CD14-positive monocyte (primary cell): ENCODE measurements at regions of chr18 and their contacts with region 1.

Region 1: DNA sequence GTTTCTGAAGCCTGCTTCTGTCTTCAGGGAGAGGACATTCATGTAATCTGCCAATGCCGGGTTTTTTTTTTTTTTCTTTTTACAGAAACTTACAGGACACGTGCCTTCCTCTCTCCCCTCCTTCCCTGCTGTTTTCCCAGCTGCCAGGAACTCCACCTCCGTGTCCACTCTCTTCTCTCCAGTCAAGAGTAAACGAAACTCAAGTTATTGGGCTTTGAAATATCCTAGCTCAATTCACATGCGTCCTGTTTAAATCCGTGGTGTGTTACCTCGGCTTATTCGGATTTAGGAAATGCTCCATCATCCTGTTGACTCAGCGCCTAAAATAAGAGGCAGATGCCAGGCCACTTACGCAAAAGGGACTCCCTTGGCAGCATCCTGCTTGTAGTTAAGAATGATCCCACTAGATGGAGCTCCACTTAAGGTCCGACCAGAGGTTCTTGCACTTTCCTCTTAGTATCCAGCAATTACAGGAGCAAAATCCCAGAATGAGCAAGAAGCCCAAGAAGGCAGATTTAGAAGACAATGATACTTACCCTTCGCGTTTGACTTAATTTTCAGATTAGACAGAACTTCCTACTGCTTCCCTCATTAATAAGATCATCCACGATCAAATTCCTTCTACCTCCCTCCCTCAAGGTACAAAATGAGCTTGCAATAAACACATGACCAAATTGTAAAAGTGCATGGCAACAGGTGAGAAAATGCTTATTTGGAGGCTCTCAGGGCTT is 97.2 kb upstream of the ZCCHC2 start:
- DNase-seq: peak; percentile 90 to 95 (median 94)
- H3K4me3 ChIP-seq: peak overlapping the region in 1 of 3 experiments; percentile 39
- H3K4me3 Mint-ChIP-seq: peak overlapping the region; percentile 48 to 89
- H3K27ac ChIP-seq: peak overlapping the region in 1 of 2 donors; percentile 20
- H3K27ac Mint-ChIP-seq: peak overlapping the region; percentile 63 to 88 (median 83)
- H3K4me1 ChIP-seq: peaks cover 26 to 32% of the 10 kb centered on the region in 2 donors
- H3K4me1 Mint-ChIP-seq: peaks cover 29% of the 10 kb centered on the region
- H3K27me3 ChIP-seq: no peaks in the 10 kb centered on the region
- H3K27me3 Mint-ChIP-seq: peaks cover 1 to 4% (median 3%) of the 10 kb centered on the region in 3 donors
- CTCF ChIP-seq: peak; percentile 87

Region 2: DNA sequence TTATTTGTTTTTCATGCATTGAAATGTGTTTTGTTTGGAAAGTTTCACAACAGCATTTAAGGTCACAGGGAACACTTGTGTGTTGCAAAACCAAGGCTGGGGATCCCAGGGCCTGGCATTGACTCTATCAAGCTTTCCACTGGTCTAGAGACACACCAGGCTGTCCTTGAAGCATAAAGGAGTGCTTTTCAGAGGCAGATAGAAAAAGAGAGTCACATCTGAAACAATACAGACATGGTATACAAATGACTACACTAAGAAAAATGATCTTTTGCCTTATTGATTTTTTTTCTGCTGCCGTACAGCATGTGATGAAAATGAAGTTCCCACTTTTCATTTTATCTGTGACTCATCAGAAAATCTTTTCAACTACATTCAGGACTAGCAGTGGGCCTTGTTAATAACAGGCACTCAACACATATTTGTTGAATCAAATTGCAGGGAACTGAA is 35.2 kb after region 1 on chr18:
- intact Hi-C with region 1: loop called in 1 of 2 experiments (anchors 5 kb)
- DNase-seq: peak; percentile 53 to 85 (median 71)
- H3K4me3 ChIP-seq: peak overlapping the region in 2 of 3 experiments; percentile 20 to 66
- H3K4me3 Mint-ChIP-seq: peak overlapping the region in 1 of 2 donors; percentile 66
- H3K27ac ChIP-seq: peak overlapping the region; percentile 72 to 91
- H3K27ac Mint-ChIP-seq: peak overlapping the region; percentile 90 to 97 (median 92)
- H3K4me1 ChIP-seq: peaks cover 40 to 52% of the 10 kb centered on the region in 2 donors
- H3K4me1 Mint-ChIP-seq: peaks cover 38% of the 10 kb centered on the region
- H3K27me3 ChIP-seq: no peaks in the 10 kb centered on the region
- H3K27me3 Mint-ChIP-seq: no peaks in the 10 kb centered on the region
- CTCF ChIP-seq: no peak

Region 3: GRCh38 chr18:62505669-62506494 is 80.3 kb after region 1 on chr18:
- intact Hi-C with region 1: no loop called
- DNase-seq: peak; percentile 34 to 74 (median 52)
- H3K4me3 ChIP-seq: peak overlapping the region; percentile 58 to 76 (median 74)
- H3K4me3 Mint-ChIP-seq: peak overlapping the region; percentile 69 to 86
- H3K27ac ChIP-seq: peak overlapping the region; percentile 42 to 88
- H3K27ac Mint-ChIP-seq: peak overlapping the region; percentile 87 to 93 (median 90)
- H3K4me1 ChIP-seq: peaks cover 18 to 27% of the 10 kb centered on the region in 2 donors
- H3K4me1 Mint-ChIP-seq: peaks cover 21% of the 10 kb centered on the region
- H3K27me3 ChIP-seq: no peaks in the 10 kb centered on the region
- H3K27me3 Mint-ChIP-seq: no peaks in the 10 kb centered on the region
- CTCF ChIP-seq: no peak

Region 4: GRCh38 chr18:62584241-62585120 is 158.9 kb after region 1 on chr18:
- intact Hi-C with region 1: loop called in 1 of 2 experiments (anchors 5 kb)
- DNase-seq: peak; percentile 72 to 82 (median 73)
- H3K4me3 ChIP-seq: peak overlapping the region in 1 of 3 experiments; percentile 52
- H3K4me3 Mint-ChIP-seq: peak overlapping the region; percentile 48 to 71
- H3K27ac ChIP-seq: peak overlapping the region; percentile 11 to 32
- H3K27ac Mint-ChIP-seq: peak overlapping the region in 3 of 7 donors; percentile 70 to 80 (median 70)
- H3K4me1 ChIP-seq: peaks cover 12 to 23% of the 10 kb centered on the region in 2 donors
- H3K4me1 Mint-ChIP-seq: peaks cover 30% of the 10 kb centered on the region
- H3K27me3 ChIP-seq: no peaks in the 10 kb centered on the region
- H3K27me3 Mint-ChIP-seq: peaks cover under 1 to 7% (median 4%) of the 10 kb centered on the region in 3 donors
- CTCF ChIP-seq: peak; percentile 94